Ascending aorta (tissue), 2 donors: ENCODE measurements at regions of chr15 and their contacts with region 1.

Region 1: GRCh38 chr15:93399121-93399520 is 310.1 kb upstream of the RGMA start:
- DNase-seq: no peak
- H3K4me3 ChIP-seq: no peak overlapping the region
- H3K27ac ChIP-seq: no peak overlapping the region
- H3K4me1 ChIP-seq: no peaks in the 10 kb centered on the region
- H3K27me3 ChIP-seq: no peaks in the 10 kb centered on the region
- CTCF ChIP-seq: no peak

Region 2: DNA sequence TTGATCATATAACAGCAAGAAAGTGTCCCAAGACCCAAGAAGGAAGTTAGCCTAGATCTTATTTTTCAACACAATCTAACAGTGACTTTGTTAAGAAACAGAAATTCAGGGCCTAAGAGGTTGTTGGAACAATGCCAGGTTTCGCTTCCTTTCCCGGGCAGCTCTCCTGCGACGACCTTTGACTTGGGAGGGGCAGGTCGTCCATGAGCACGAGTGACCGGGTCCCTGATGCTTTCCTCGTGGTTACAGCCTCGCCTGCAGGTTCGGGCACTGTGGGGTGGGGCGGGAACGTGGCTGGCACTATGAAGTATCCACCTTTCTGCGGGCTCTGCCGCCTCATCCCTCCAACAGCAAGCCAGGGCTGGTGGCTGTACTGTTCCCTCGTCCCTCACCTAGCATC is 220.0 kb before region 1 on chr15:
- intact Hi-C with region 1: no loop called
- DNase-seq: peak; percentile 20 to 68
- H3K4me3 ChIP-seq: no peak overlapping the region
- H3K27ac ChIP-seq: no peak overlapping the region
- H3K4me1 ChIP-seq: no peaks in the 10 kb centered on the region
- H3K27me3 ChIP-seq: no peaks in the 10 kb centered on the region
- CTCF ChIP-seq: no peak

Region 3: DNA sequence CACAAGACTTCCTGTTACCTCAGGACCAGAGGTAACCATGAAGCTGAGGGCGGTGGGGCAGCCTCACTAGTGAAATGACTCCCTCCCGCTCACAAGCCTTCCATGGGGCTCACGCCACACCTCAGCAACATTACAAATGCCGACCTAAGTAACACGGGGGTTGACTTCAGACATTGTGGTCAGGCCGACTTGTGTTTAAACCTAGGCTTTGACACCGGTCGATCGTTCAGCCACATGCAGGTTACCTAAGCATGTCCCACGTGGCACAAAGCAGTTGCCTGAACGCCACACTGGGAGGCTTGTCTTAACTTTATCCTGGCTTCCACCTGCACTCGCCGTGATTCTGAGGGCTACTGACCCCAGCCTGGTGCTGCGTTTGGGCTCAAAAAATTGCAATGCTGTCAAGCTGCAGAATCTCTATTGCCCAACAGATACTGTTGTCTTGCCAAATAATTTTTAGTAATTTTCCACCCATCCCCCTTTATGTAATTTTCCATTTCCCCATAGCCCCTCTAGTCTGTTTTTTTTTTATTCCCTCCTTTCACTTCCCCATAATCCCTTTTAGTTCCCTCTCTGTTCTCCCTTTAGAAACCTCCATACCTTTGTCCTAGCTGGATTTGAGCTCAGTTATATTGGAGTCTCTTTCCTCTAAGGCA is 151.5 kb before region 1 on chr15:
- intact Hi-C with region 1: loop called (anchors 10 kb)
- DNase-seq: no peak
- H3K4me3 ChIP-seq: no peak overlapping the region
- H3K27ac ChIP-seq: no peak overlapping the region
- H3K4me1 ChIP-seq: no peaks in the 10 kb centered on the region
- H3K27me3 ChIP-seq: no peaks in the 10 kb centered on the region
- CTCF ChIP-seq: no peak

Region 4: GRCh38 chr15:93298901-93299300 is 100.2 kb before region 1 on chr15:
- intact Hi-C with region 1: no loop called
- DNase-seq: no peak
- H3K4me3 ChIP-seq: no peak overlapping the region
- H3K27ac ChIP-seq: no peak overlapping the region
- H3K4me1 ChIP-seq: no peaks in the 10 kb centered on the region
- H3K27me3 ChIP-seq: no peaks in the 10 kb centered on the region
- CTCF ChIP-seq: no peak

Region 5: GRCh38 chr15:93413745-93414144 is 14.6 kb after region 1 on chr15:
- intact Hi-C with region 1: no loop called
- DNase-seq: no peak
- H3K4me3 ChIP-seq: no peak overlapping the region
- H3K27ac ChIP-seq: no peak overlapping the region
- H3K4me1 ChIP-seq: no peaks in the 10 kb centered on the region
- H3K27me3 ChIP-seq: no peaks in the 10 kb centered on the region
- CTCF ChIP-seq: no peak

Region 6: DNA sequence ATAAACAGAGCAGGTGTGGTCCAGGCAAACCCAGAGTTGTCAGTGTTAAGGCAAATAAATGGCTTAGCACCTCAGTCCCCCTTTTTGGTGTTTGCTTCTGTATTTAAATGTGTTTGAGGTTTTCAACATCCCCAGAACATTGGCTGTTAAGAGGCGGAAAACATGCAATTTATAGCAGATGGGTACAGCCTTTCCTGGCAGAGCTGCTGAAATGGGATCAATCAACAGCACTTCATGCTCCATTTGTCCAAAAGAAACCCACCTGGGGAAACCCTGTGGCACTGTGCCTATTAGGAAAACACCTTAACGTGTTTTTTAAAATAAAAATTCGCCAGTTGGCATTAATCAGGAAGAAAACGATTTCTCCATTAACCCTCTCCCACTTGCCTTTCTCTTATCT is 967.7 kb after region 1 on chr15:
- intact Hi-C with region 1: no loop called
- DNase-seq: no peak
- H3K4me3 ChIP-seq: no peak overlapping the region
- H3K27ac ChIP-seq: no peak overlapping the region
- H3K4me1 ChIP-seq: no peaks in the 10 kb centered on the region
- H3K27me3 ChIP-seq: no peaks in the 10 kb centered on the region
- CTCF ChIP-seq: no peak